ENCODE measurements at regions of chr3 and their contacts with region 1.

Region 1: GRCh38 chr3:133927540-133928066 is 31.9 kb upstream of the RAB6B start:
- DNase-seq: peak; percentile 54 to 83 (median 64)
- ATAC-seq: peak in 3 of 4 donors; percentile 69 to 89 (median 78)
- H3K4me3 ChIP-seq: peak overlapping the region; percentile 30 to 74 (median 56)
- H3K27ac ChIP-seq: no peak overlapping the region
- H3K4me1 ChIP-seq: peaks cover 0 to 18% (median 8%) of the 10 kb centered on the region in 12 donors
- H3K27me3 ChIP-seq: peaks cover 0 to 3% (median 0%) of the 10 kb centered on the region in 9 donors
- CTCF ChIP-seq: peak; percentile 48 to 98 (median 80)
- POLR2A ChIP-seq: no peak

Region 2: DNA sequence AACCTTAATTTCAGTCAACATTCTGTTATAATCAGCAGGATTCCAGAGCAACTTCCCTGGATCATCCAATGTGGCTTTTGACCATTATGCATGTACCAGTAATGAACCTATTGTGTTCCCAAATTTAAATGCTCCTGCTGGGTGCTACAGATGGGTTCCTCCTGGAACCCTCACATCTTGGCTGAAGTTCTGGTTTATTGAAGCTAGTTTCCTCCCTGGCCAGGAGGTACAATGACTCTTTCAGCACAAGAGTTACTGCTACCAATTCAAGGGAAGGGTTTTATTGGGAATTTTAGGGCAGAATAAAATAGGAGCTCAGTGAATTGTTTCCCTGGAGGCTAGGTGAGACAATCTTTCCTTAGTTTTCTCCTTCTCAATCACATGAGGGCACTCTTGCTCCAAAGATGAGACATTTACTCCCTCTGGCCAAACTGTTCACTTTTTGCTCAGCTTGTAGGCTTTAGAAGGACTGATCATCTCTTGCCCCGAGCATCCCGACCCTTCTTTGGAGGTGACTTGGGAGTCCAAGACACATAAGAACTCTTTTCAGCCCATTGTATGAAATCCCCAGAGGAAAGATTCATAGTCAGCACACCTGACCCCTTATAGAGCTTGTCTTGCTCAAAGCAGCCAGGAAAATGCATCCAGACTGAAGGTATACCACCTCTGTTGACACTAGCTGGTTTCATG is 1196.6 kb before region 1 on chr3:
- intact Hi-C with region 1: loop called in 3 of 10 experiments (anchors 10 kb)
- DNase-seq: peak in 2 of 5 donors; percentile 14 to 18
- ATAC-seq: peak; percentile 42 to 83 (median 71)
- H3K4me3 ChIP-seq: no peak overlapping the region
- H3K27ac ChIP-seq: no peak overlapping the region
- H3K4me1 ChIP-seq: peaks cover 0 to 2% (median 0%) of the 10 kb centered on the region in 12 donors
- H3K27me3 ChIP-seq: peaks cover 0 to 4% (median 0%) of the 10 kb centered on the region in 9 donors
- CTCF ChIP-seq: peak in 11 of 12 donors; percentile 18 to 61 (median 44)
- POLR2A ChIP-seq: no peak

Region 3: GRCh38 chr3:133675631-133676335 is 251.8 kb before region 1 on chr3:
- intact Hi-C with region 1: no loop called
- DNase-seq: no peak
- ATAC-seq: no peak
- H3K4me3 ChIP-seq: no peak overlapping the region
- H3K27ac ChIP-seq: no peak overlapping the region
- H3K4me1 ChIP-seq: peaks cover 0 to 8% (median 0%) of the 10 kb centered on the region in 12 donors
- H3K27me3 ChIP-seq: peaks cover 0 to 40% (median 12%) of the 10 kb centered on the region in 9 donors
- CTCF ChIP-seq: no peak
- POLR2A ChIP-seq: no peak

Region 4: DNA sequence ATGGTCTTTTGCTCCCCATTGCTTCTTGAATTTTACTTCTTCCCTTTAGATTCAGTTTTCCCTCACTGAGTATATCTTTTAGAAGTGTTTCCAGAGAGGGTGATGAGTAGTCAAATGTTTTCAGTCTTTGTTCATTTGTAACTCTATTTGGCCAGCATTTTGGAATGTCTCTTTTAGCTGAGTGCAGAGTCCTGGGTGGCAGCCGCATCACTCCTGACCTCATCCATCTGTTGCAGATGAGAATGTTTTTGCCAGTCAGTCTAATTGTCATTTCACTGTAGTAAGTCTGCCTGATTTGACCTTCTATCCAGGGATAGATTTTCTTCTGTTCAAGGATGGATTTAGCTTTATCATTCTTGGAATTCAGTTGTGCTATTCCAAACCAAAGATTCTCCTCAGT is 114.7 kb before region 1 on chr3:
- intact Hi-C with region 1: loop called in 9 of 10 experiments (anchors 1 to 5 kb)
- DNase-seq: no peak
- ATAC-seq: peak in 1 of 4 donors; percentile 60
- H3K4me3 ChIP-seq: no peak overlapping the region
- H3K27ac ChIP-seq: no peak overlapping the region
- H3K4me1 ChIP-seq: peaks cover 0 to 10% (median 0%) of the 10 kb centered on the region in 12 donors
- H3K27me3 ChIP-seq: no peaks in the 10 kb centered on the region
- CTCF ChIP-seq: no peak
- POLR2A ChIP-seq: no peak

Region 5: DNA sequence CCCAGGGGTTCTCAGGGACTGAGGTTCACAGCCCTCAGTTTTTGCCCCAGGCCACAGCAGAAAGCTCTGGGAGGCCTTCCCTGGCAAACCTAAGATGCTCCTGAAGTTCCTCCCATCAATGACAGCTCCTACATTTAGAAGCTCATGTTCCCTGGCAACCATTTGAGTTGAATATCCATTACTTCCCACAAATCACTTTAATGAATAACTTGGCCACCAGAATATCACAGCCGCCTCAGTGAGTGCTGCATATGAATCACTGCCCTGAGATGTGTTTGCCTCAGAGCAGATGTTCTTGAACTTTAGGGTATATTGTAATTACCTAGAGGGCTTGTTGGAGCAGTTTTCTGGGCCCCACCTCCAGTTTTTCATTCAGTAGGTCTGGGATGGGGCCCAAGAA is 74.7 kb after region 1 on chr3:
- intact Hi-C with region 1: no loop called
- DNase-seq: no peak
- ATAC-seq: no peak
- H3K4me3 ChIP-seq: no peak overlapping the region
- H3K27ac ChIP-seq: no peak overlapping the region
- H3K4me1 ChIP-seq: no peaks in the 10 kb centered on the region
- H3K27me3 ChIP-seq: no peaks in the 10 kb centered on the region
- CTCF ChIP-seq: no peak
- POLR2A ChIP-seq: no peak

Region 6: GRCh38 chr3:134039161-134039862 is 111.7 kb after region 1 on chr3:
- intact Hi-C with region 1: loop called in 2 of 10 experiments (anchors 5 to 10 kb)
- DNase-seq: peak in 1 of 5 donors; percentile 64
- ATAC-seq: peak in 3 of 4 donors; percentile 61 to 77 (median 66)
- H3K4me3 ChIP-seq: no peak overlapping the region
- H3K27ac ChIP-seq: no peak overlapping the region
- H3K4me1 ChIP-seq: peaks cover 0 to 8% (median 0%) of the 10 kb centered on the region in 12 donors
- H3K27me3 ChIP-seq: no peaks in the 10 kb centered on the region
- CTCF ChIP-seq: peak in 11 of 12 donors; percentile 11 to 46 (median 31)
- POLR2A ChIP-seq: no peak

Region 7: GRCh38 chr3:134212906-134213665 is 285.5 kb after region 1 on chr3:
- intact Hi-C with region 1: loop called in 7 of 10 experiments (anchors 2 to 10 kb)
- DNase-seq: peak; percentile 71 to 81 (median 76)
- ATAC-seq: peak; percentile 70 to 86 (median 83)
- H3K4me3 ChIP-seq: no peak overlapping the region
- H3K27ac ChIP-seq: no peak overlapping the region
- H3K4me1 ChIP-seq: peaks cover 0 to 28% (median 4%) of the 10 kb centered on the region in 12 donors
- H3K27me3 ChIP-seq: no peaks in the 10 kb centered on the region
- CTCF ChIP-seq: peak; percentile 90 to 99 (median 98)
- POLR2A ChIP-seq: no peak